Mammary epithelial cell (primary cell): ENCODE measurements at regions of chr10 and their contacts with region 1.

Region 1: DNA sequence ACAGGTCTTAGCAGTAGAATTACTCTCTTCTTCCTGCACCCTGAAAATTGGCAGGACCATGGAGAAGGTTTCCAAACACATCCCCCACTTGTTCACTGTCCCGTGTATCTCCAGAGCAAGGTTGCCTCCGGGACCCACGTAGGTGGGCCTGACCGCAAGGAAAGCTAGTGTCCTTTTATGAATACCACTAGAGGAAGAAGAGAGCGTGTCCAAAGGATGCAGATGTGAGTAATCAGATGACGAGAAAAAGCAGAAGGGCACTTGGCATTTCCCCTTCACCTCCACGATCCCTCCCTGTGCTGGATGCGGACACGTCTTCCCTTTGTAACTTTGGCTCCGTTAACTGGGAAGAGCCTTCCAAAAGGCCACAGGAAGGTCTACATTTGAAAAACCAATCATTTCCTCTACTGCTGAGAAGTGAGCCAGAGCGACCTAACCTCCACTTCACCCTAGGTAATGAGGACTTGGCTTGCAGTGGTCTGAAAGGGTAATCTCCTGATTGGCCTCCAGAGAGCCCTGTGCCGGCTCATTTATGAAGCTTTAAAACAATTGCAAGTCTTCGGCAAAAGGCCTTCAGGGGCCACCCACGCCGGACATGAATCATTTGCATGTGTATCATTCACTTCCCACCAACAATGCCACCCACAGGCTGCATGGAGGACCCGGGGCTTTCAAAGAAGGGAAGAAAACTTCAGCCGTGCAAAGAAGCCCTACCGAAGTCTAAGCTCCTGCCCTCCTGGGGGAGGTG is 55.4 kb downstream of the LYZL1 start:
- DNase-seq: peak; percentile 62
- H3K4me3 ChIP-seq: no peak overlapping the region
- H3K27ac ChIP-seq: no peak overlapping the region
- H3K4me1 ChIP-seq: peaks cover 12% of the 10 kb centered on the region
- H3K27me3 ChIP-seq: no peaks in the 10 kb centered on the region
- CTCF ChIP-seq: peak in 1 of 2 donors; percentile 4

Region 2: GRCh38 chr10:29254123-29255046 is 89.9 kb before region 1 on chr10:
- CTCF ChIA-PET with region 1: no interaction called
- dilution Hi-C with region 1: loop called (anchors 5 kb)
- in situ Hi-C with region 1: no loop called
- intact Hi-C with region 1: no loop called
- DNase-seq: no peak
- H3K4me3 ChIP-seq: no peak overlapping the region
- H3K27ac ChIP-seq: no peak overlapping the region
- H3K4me1 ChIP-seq: no peaks in the 10 kb centered on the region
- H3K27me3 ChIP-seq: no peaks in the 10 kb centered on the region
- CTCF ChIP-seq: no peak

Region 3: GRCh38 chr10:29266641-29267040 is 77.6 kb before region 1 on chr10:
- CTCF ChIA-PET with region 1: no interaction called
- dilution Hi-C with region 1: no loop called
- in situ Hi-C with region 1: no loop called
- intact Hi-C with region 1: no loop called
- DNase-seq: no peak
- H3K4me3 ChIP-seq: no peak overlapping the region
- H3K27ac ChIP-seq: no peak overlapping the region
- H3K4me1 ChIP-seq: no peaks in the 10 kb centered on the region
- H3K27me3 ChIP-seq: peaks cover 1% of the 10 kb centered on the region
- CTCF ChIP-seq: no peak